Naive thymus-derived CD8-positive, alpha-beta T cell (primary cell): ENCODE measurements at regions of chr17 and their contacts with region 1.

Region 1: GRCh38 chr17:39094607-39095308 is 56.7 kb downstream of the PLXDC1 start:
- DNase-seq: peak in 8 of 10 donors; percentile 11 to 79 (median 64)
- ATAC-seq: peak; percentile 37 to 60
- H3K4me3 Mint-ChIP-seq: peak overlapping the region; percentile 62 to 88 (median 84)
- H3K27ac Mint-ChIP-seq: peak overlapping the region; percentile 89 to 99 (median 96)
- H3K4me1 Mint-ChIP-seq: peaks cover 60 to 94% (median 90%) of the 10 kb centered on the region in 4 donors
- H3K27me3 Mint-ChIP-seq: no peaks in the 10 kb centered on the region

Region 2: DNA sequence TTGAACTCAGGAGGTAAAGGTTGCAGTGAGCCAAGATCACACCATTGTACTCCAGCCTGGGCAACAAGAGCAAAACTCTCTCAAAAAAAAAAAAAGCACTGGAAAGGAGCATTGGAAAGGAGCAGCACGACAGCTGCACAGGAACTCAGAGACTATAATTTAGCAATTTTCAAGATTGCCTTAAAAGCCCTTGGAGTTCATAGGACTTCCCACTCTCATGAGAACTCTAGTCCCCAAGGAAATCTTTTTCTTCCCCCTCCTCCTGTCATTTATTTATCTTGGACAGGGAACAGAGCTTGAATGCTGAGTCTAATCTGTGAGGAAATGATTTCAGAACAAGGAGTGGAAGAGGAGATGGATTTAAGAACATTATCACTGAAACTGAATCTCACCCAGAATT is 12.3 kb before region 1 on chr17:
- POLR2A ChIA-PET with region 1: interaction called, 11 read pairs
- DNase-seq: no peak
- ATAC-seq: no peak
- H3K4me3 Mint-ChIP-seq: no peak overlapping the region
- H3K27ac Mint-ChIP-seq: no peak overlapping the region
- H3K4me1 Mint-ChIP-seq: peaks cover 3 to 11% (median 6%) of the 10 kb centered on the region in 4 donors
- H3K27me3 Mint-ChIP-seq: no peaks in the 10 kb centered on the region